OCI-LY7 (cell line): ENCODE measurements at regions of chr11 and their contacts with region 1.

Region 1: GRCh38 chr11:2885676-2886081 is at the start of gene CDKN1C:
- DNase-seq: peak; percentile 82
- H3K4me3 ChIP-seq: peak within 1 kb of the TSS; percentile 65
- H3K27ac ChIP-seq: no peak within 1 kb of the TSS
- H3K4me1 ChIP-seq: peaks cover 13% of the 10 kb centered on the region
- CTCF ChIP-seq: no peak
- total RNA-seq, gene CDKN1C: 0.13 TPM in 1 of 2 replicates, not detected in the other

Region 2: DNA sequence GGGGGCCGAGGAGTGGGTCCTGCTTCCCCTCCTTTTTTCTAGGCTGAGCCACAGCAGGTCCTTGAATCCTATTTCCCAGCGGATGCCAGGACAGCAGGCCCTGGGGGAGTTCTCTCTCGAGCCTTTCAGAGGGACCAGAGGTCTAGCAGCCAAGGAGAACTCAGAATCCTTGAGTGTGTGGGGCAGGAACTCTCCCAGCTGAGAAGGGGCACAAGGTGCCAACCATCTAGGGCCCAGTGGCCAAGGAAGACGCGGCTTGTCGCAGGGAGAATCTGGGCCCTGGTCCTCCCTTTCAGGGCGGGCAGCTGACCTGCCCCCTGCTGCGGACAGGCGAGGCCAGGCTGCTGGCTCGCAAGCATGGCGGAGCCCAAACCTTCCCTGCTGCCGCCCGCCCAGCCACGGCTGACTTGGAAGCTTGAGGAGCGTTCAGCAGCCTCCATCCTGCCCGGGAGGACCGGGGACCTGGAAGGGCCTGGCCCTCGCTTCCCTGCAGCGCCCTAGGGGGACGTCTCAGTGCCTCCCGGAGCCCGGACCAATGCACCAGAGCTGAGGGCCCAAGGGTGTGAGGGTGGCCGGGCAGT is 486.1 kb before region 1 on chr11:
- CTCF ChIA-PET with region 1: no interaction called
- POLR2A ChIA-PET with region 1: no interaction called
- intact Hi-C with region 1: no loop called
- DNase-seq: no peak
- H3K4me3 ChIP-seq: peak overlapping the region; percentile 77
- H3K27ac ChIP-seq: peak overlapping the region; percentile 80
- H3K4me1 ChIP-seq: peaks cover 28% of the 10 kb centered on the region
- CTCF ChIP-seq: no peak

Region 3: DNA sequence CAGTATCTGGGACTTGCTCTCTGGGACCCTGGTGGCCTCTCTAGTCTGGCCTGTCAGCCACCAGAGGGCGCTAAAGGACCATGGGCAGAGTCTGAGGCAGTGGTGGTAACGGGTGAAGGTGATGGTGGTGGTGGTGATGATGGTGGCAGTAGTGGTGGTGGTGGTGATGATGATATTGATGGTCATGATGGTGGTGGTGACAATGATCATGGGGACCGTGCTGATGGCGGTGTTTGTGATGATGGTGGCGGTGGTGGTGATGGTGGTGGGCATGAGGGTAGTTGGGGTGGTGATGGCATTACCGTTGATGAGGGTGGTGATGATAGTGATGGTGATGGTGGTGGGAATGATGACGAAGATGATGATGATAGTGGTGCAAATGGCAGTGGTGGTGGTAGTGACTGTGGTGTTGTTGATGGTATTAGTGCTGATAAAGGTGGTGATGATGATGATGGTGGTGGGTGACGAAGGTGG is 457.3 kb before region 1 on chr11:
- CTCF ChIA-PET with region 1: no interaction called
- POLR2A ChIA-PET with region 1: no interaction called
- intact Hi-C with region 1: loop called (anchors 2 kb)
- DNase-seq: peak; percentile 73
- H3K4me3 ChIP-seq: no peak overlapping the region
- H3K27ac ChIP-seq: no peak overlapping the region
- H3K4me1 ChIP-seq: no peaks in the 10 kb centered on the region
- CTCF ChIP-seq: peak; percentile 94

Region 4: GRCh38 chr11:2691991-2692875 is 193.4 kb before region 1 on chr11:
- CTCF ChIA-PET with region 1: no interaction called
- POLR2A ChIA-PET with region 1: no interaction called
- intact Hi-C with region 1: loop called (anchors 5 kb)
- DNase-seq: peak; percentile 45
- H3K4me3 ChIP-seq: no peak overlapping the region
- H3K27ac ChIP-seq: no peak overlapping the region
- H3K4me1 ChIP-seq: no peaks in the 10 kb centered on the region
- CTCF ChIP-seq: peak; percentile 70